Panc1 (cell line): ENCODE measurements at regions of chr5 and their contacts with region 1.

Region 1: GRCh38 chr5:149561848-149562247 is 10.6 kb upstream of the CSNK1A1 start:
- DNase-seq: peak; percentile 94
- ATAC-seq: peak; percentile 90
- H3K4me3 ChIP-seq: peak overlapping the region; percentile 11 to 47
- H3K27ac ChIP-seq: peak overlapping the region; percentile 96
- H3K4me1 ChIP-seq: peaks cover 29% of the 10 kb centered on the region
- H3K27me3 ChIP-seq: no peaks in the 10 kb centered on the region
- CTCF ChIP-seq: no peak

Region 2: GRCh38 chr5:149141224-149141956 is 420.5 kb before region 1 on chr5 and contains the start of gene ABLIM3:
- CTCF ChIA-PET with region 1: no interaction called
- POLR2A ChIA-PET with region 1: no interaction called
- in situ Hi-C with region 1: no loop called
- intact Hi-C with region 1: loop called (anchors 10 kb)
- DNase-seq: no peak
- ATAC-seq: peak; percentile 91
- H3K4me3 ChIP-seq: peak within 1 kb of the TSS; percentile 65 to 74
- H3K27ac ChIP-seq: peak within 1 kb of the TSS; percentile 54
- H3K4me1 ChIP-seq: 0 out of 2 replicates have a peak, but pooled peaks cover 4% of the 10 kb centered on the region
- H3K27me3 ChIP-seq: no peaks in the 10 kb centered on the region
- CTCF ChIP-seq: peak; percentile 98
- total RNA-seq, gene ABLIM3: 12.9 TPM

Region 3: DNA sequence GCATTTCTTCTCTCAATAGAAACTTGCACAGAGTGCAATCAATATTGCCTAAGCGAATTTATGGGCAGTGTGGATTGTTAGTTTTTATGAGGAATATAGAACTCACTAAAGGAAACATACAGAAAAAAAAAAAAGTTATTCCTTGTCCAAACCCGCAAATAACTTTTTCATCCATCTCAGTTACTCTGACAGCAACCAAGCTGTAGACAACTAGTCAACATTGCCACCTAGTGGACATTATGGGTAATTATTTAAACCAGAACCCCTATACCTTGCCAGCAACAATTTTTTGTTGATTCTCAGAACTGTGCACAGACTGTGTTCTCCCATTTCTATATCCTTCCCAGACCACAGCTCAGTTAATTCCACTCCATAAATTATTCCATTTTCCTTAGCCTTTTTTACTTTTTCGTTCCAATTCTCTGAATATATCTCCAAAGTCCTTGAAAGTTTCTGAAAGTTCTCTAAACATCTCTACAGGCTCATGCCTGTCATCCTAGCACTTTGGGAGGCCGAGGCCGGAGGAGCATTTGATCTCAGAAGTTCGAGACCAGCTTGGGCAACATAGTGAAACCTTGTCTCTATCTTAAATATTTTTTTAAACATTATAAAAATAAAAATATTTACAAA is 292.8 kb before region 1 on chr5:
- CTCF ChIA-PET with region 1: interaction called, 8 read pairs
- POLR2A ChIA-PET with region 1: no interaction called
- in situ Hi-C with region 1: no loop called
- intact Hi-C with region 1: loop called (anchors 5 kb)
- DNase-seq: no peak
- ATAC-seq: no peak
- H3K4me3 ChIP-seq: no peak overlapping the region
- H3K27ac ChIP-seq: no peak overlapping the region
- H3K4me1 ChIP-seq: peaks cover 10% of the 10 kb centered on the region; the same call in 1 of the 2 replicates
- H3K27me3 ChIP-seq: no peaks in the 10 kb centered on the region
- CTCF ChIP-seq: peak; percentile 78

Region 4: DNA sequence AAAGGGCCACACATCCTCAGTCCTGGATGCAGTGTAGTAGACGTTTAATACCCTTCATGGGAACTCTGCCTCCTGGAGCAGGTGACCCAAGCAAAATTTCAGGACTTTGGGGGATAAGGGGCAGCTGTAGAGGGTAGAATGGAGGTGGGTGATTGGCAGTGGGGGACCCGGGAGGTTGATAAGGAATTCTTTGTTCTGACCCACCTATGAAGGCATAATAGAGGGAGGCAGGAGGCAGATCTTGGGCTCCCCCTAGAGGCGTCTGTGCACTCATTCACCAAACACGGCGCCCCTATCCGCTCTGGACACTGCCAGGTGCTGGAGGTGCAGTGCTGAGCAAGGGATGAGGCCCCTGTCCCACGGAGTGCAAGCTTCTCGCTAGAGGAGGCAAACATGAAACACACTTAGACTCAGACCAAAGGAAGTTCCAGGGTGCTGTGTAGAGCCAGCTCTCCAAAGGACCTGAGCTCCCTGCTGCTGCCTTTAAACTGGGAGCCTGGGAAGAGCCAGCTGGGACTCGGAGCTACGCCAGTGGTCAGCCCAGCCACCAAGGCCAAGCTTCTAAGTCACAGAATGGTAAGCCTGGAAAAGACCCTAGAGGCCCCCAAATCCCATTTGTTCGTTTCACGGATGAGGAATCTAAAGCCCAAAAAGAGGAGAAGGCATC is 190.4 kb before region 1 on chr5:
- CTCF ChIA-PET with region 1: interaction called, 3 read pairs
- POLR2A ChIA-PET with region 1: interaction called, 16 read pairs
- in situ Hi-C with region 1: no loop called
- intact Hi-C with region 1: no loop called
- DNase-seq: peak; percentile 43
- ATAC-seq: peak; percentile 92
- H3K4me3 ChIP-seq: no peak overlapping the region
- H3K27ac ChIP-seq: no peak overlapping the region
- H3K4me1 ChIP-seq: no peaks in the 10 kb centered on the region
- H3K27me3 ChIP-seq: no peaks in the 10 kb centered on the region
- CTCF ChIP-seq: peak; percentile 96

Region 5: GRCh38 chr5:149381987-149382340 is 179.9 kb before region 1 on chr5:
- CTCF ChIA-PET with region 1: interaction called, 4 read pairs
- POLR2A ChIA-PET with region 1: no interaction called
- in situ Hi-C with region 1: no loop called
- intact Hi-C with region 1: loop called (anchors 1 kb)
- DNase-seq: no peak
- ATAC-seq: peak; percentile 93
- H3K4me3 ChIP-seq: no peak overlapping the region
- H3K27ac ChIP-seq: no peak overlapping the region
- H3K4me1 ChIP-seq: 0 out of 2 replicates have a peak, but pooled peaks cover 3% of the 10 kb centered on the region
- H3K27me3 ChIP-seq: no peaks in the 10 kb centered on the region
- CTCF ChIP-seq: peak; percentile 97

Region 6: GRCh38 chr5:149442563-149443182 is 119.2 kb before region 1 on chr5:
- CTCF ChIA-PET with region 1: interaction called, 8 read pairs
- POLR2A ChIA-PET with region 1: interaction called, 3 read pairs
- in situ Hi-C with region 1: no loop called
- intact Hi-C with region 1: loop called (anchors 2 kb)
- DNase-seq: peak; percentile 68
- ATAC-seq: peak; percentile 87
- H3K4me3 ChIP-seq: no peak overlapping the region
- H3K27ac ChIP-seq: peak overlapping the region; percentile 78
- H3K4me1 ChIP-seq: peaks cover 36% of the 10 kb centered on the region
- H3K27me3 ChIP-seq: no peaks in the 10 kb centered on the region
- CTCF ChIP-seq: peak; percentile 97